GM12878 (cell line): ENCODE measurements at regions of chr1 and their contacts with region 1.

Region 1: GRCh38 chr1:39098546-39099250 is 72.5 kb downstream of the NDUFS5 start:
- DNase-seq: no peak
- ATAC-seq: peak; percentile 79
- H3K4me3 ChIP-seq: no peak overlapping the region
- H3K27ac ChIP-seq: no peak overlapping the region
- H3K4me1 ChIP-seq: peaks cover 13% of the 10 kb centered on the region
- H3K27me3 ChIP-seq: no peaks in the 10 kb centered on the region
- CTCF ChIP-seq: peak; percentile 76 to 87 (median 86)
- EP300 ChIP-seq: no peak
- POLR2A ChIP-seq: no peak
- RAD21 ChIP-seq: peak; percentile 96

Region 2: DNA sequence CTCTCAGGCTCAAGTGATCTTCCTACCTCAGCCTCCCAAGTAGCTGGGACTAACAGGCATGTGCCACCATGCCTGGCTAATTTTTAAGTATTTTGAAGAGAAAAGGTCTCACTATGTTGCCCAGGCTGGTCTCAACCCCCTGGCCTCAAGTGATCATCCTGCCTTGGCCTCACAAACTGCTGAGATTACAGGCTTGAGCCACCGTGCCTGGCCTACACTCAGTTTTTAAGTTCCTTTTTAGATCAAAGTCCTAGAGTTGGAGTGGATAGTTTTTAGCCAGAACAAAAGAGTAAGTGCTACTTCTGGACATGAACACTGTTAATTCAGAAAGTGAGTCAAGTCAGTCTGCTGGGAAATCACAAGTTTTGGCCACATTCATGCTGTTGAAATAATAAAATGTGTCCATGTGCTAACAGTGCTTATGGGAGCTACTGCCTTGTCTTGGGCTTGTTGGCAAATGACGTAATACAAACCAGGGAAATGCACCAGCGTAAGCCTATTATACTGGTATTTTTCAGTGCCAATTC is 11.7 kb after region 1 on chr1:
- CTCF ChIA-PET with region 1: interaction called, 12 read pairs
- POLR2A ChIA-PET with region 1: no interaction called
- RAD21 ChIA-PET with region 1: interaction called, 10 read pairs
- SMC1A ChIA-PET with region 1: interaction called, 23 read pairs
- in situ Hi-C with region 1: no loop called
- intact Hi-C with region 1: no loop called
- DNase-seq: no peak
- ATAC-seq: peak; percentile 1; the same call in 1 of the 3 replicates
- H3K4me3 ChIP-seq: 0 out of 2 replicates have a peak overlapping the region, but pooled peaks have one; percentile 9
- H3K27ac ChIP-seq: peak overlapping the region; percentile 31; the same call in 1 of the 2 replicates
- H3K4me1 ChIP-seq: peaks cover 24% of the 10 kb centered on the region; the same call in 1 of the 2 replicates
- H3K27me3 ChIP-seq: no peaks in the 10 kb centered on the region
- CTCF ChIP-seq: no peak
- EP300 ChIP-seq: no peak
- POLR2A ChIP-seq: no peak
- RAD21 ChIP-seq: no peak

Region 3: DNA sequence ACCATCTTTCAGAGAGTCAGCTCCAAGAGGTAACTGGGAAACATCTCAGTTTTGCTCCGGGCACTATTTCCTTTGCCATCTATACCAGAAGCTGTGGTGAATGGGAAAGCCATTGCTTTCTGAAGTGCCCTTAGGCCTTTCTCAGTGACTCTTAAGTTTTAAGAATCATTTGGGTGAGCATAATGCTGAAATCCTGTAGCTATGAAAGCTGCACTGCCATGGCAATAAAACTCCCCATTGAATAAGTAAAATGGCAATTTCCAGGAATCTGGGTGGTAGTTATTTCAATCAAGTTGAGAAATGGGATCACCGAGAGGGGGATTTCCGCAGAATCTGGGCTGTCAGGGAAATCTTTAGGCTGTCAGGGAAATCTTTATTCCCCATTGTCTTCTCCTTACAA is 79.0 kb after region 1 on chr1:
- CTCF ChIA-PET with region 1: interaction called, 465 read pairs
- POLR2A ChIA-PET with region 1: no interaction called
- RAD21 ChIA-PET with region 1: interaction called, 3 read pairs
- SMC1A ChIA-PET with region 1: interaction called, 23 read pairs
- in situ Hi-C with region 1: no loop called
- intact Hi-C with region 1: no loop called
- DNase-seq: no peak
- ATAC-seq: no peak
- H3K4me3 ChIP-seq: no peak overlapping the region
- H3K27ac ChIP-seq: no peak overlapping the region
- H3K4me1 ChIP-seq: no peaks in the 10 kb centered on the region
- H3K27me3 ChIP-seq: no peaks in the 10 kb centered on the region
- CTCF ChIP-seq: no peak
- EP300 ChIP-seq: no peak
- POLR2A ChIP-seq: no peak
- RAD21 ChIP-seq: no peak

Region 4: GRCh38 chr1:39214998-39215873 is 116.5 kb after region 1 on chr1:
- CTCF ChIA-PET with region 1: interaction called, 14 read pairs
- POLR2A ChIA-PET with region 1: interaction called, 3 read pairs
- RAD21 ChIA-PET with region 1: interaction called, 9 read pairs
- SMC1A ChIA-PET with region 1: interaction called, 6 read pairs
- in situ Hi-C with region 1: no loop called
- intact Hi-C with region 1: no loop called
- DNase-seq: peak; percentile 79
- ATAC-seq: peak; percentile 87
- H3K4me3 ChIP-seq: peak overlapping the region; percentile 85
- H3K27ac ChIP-seq: peak overlapping the region; percentile 87
- H3K4me1 ChIP-seq: peaks cover 19% of the 10 kb centered on the region
- H3K27me3 ChIP-seq: no peaks in the 10 kb centered on the region
- CTCF ChIP-seq: no peak
- EP300 ChIP-seq: no peak
- POLR2A ChIP-seq: peak; percentile 84
- RAD21 ChIP-seq: no peak

Region 5: GRCh38 chr1:39275836-39276507 is 177.3 kb after region 1 on chr1:
- CTCF ChIA-PET with region 1: interaction called, 44 read pairs
- POLR2A ChIA-PET with region 1: no interaction called
- RAD21 ChIA-PET with region 1: interaction called, 6 read pairs
- SMC1A ChIA-PET with region 1: interaction called, 4 read pairs
- in situ Hi-C with region 1: no loop called
- intact Hi-C with region 1: no loop called
- DNase-seq: no peak
- ATAC-seq: no peak
- H3K4me3 ChIP-seq: no peak overlapping the region
- H3K27ac ChIP-seq: no peak overlapping the region
- H3K4me1 ChIP-seq: peaks cover 21% of the 10 kb centered on the region
- H3K27me3 ChIP-seq: no peaks in the 10 kb centered on the region
- CTCF ChIP-seq: no peak
- EP300 ChIP-seq: no peak
- POLR2A ChIP-seq: no peak
- RAD21 ChIP-seq: no peak

Region 6: GRCh38 chr1:39410915-39411436 is 312.3 kb after region 1 on chr1:
- CTCF ChIA-PET with region 1: interaction called, 19 read pairs
- POLR2A ChIA-PET with region 1: no interaction called
- RAD21 ChIA-PET with region 1: interaction called, 10 read pairs
- SMC1A ChIA-PET with region 1: interaction called, 9 read pairs
- in situ Hi-C with region 1: no loop called
- intact Hi-C with region 1: no loop called
- DNase-seq: no peak
- ATAC-seq: peak; percentile 44
- H3K4me3 ChIP-seq: no peak overlapping the region
- H3K27ac ChIP-seq: no peak overlapping the region
- H3K4me1 ChIP-seq: peaks cover 33% of the 10 kb centered on the region
- H3K27me3 ChIP-seq: no peaks in the 10 kb centered on the region
- CTCF ChIP-seq: peak; percentile 65 to 70 (median 68)
- EP300 ChIP-seq: no peak
- POLR2A ChIP-seq: no peak
- RAD21 ChIP-seq: peak; percentile 65

Region 7: GRCh38 chr1:39653546-39654031 is 554.9 kb after region 1 on chr1:
- CTCF ChIA-PET with region 1: interaction called, 15 read pairs
- POLR2A ChIA-PET with region 1: no interaction called
- RAD21 ChIA-PET with region 1: interaction called, 3 read pairs
- SMC1A ChIA-PET with region 1: interaction called, 3 read pairs
- in situ Hi-C with region 1: no loop called
- intact Hi-C with region 1: loop called (anchors 10 kb)
- DNase-seq: peak; percentile 23
- ATAC-seq: peak; percentile 82
- H3K4me3 ChIP-seq: no peak overlapping the region
- H3K27ac ChIP-seq: no peak overlapping the region
- H3K4me1 ChIP-seq: peaks cover 3% of the 10 kb centered on the region; the same call in 1 of the 2 replicates
- H3K27me3 ChIP-seq: no peaks in the 10 kb centered on the region; a peak in 1 of 4 replicates
- CTCF ChIP-seq: peak; percentile 87 to 91 (median 91)
- EP300 ChIP-seq: no peak
- POLR2A ChIP-seq: no peak
- RAD21 ChIP-seq: peak; percentile 82